H1 (cell line): ENCODE measurements at regions of chr6 and their contacts with region 1.

Region 1: GRCh38 chr6:109526905-109527628 is 44.0 kb upstream of the ZBTB24 start:
- DNase-seq: peak in 1 of 2 experiments; percentile 64
- H3K4me3 ChIP-seq: no peak overlapping the region
- H3K27ac ChIP-seq: no peak overlapping the region
- H3K4me1 ChIP-seq: peaks cover 0 to 3% (median 0%) of the 10 kb centered on the region in 4 experiments; a peak in 1 of 7 replicates
- H3K27me3 ChIP-seq: no peaks in the 10 kb centered on the region
- CTCF ChIP-seq: peak; percentile 36 to 74 (median 67)
- EP300 ChIP-seq: no peak
- POLR2A ChIP-seq: no peak
- RAD21 ChIP-seq: peak; percentile 83 to 85

Region 2: GRCh38 chr6:109263873-109264700 is 263.0 kb before region 1 on chr6:
- CTCF ChIA-PET with region 1: no interaction called
- POLR2A ChIA-PET with region 1: no interaction called
- DNase-seq: no peak
- H3K4me3 ChIP-seq: no peak overlapping the region
- H3K27ac ChIP-seq: no peak overlapping the region
- H3K4me1 ChIP-seq: peaks cover 0 to 5% (median 0%) of the 10 kb centered on the region in 4 experiments; a peak in 2 of 7 replicates
- H3K27me3 ChIP-seq: no peaks in the 10 kb centered on the region
- CTCF ChIP-seq: no peak
- EP300 ChIP-seq: no peak
- POLR2A ChIP-seq: no peak
- RAD21 ChIP-seq: no peak

Region 3: GRCh38 chr6:109284675-109285074 is 242.4 kb before region 1 on chr6:
- CTCF ChIA-PET with region 1: no interaction called
- POLR2A ChIA-PET with region 1: no interaction called
- DNase-seq: no peak
- H3K4me3 ChIP-seq: no peak overlapping the region
- H3K27ac ChIP-seq: no peak overlapping the region
- H3K4me1 ChIP-seq: no peaks in the 10 kb centered on the region
- H3K27me3 ChIP-seq: no peaks in the 10 kb centered on the region
- CTCF ChIP-seq: no peak
- EP300 ChIP-seq: no peak
- POLR2A ChIP-seq: no peak
- RAD21 ChIP-seq: no peak

Region 4: DNA sequence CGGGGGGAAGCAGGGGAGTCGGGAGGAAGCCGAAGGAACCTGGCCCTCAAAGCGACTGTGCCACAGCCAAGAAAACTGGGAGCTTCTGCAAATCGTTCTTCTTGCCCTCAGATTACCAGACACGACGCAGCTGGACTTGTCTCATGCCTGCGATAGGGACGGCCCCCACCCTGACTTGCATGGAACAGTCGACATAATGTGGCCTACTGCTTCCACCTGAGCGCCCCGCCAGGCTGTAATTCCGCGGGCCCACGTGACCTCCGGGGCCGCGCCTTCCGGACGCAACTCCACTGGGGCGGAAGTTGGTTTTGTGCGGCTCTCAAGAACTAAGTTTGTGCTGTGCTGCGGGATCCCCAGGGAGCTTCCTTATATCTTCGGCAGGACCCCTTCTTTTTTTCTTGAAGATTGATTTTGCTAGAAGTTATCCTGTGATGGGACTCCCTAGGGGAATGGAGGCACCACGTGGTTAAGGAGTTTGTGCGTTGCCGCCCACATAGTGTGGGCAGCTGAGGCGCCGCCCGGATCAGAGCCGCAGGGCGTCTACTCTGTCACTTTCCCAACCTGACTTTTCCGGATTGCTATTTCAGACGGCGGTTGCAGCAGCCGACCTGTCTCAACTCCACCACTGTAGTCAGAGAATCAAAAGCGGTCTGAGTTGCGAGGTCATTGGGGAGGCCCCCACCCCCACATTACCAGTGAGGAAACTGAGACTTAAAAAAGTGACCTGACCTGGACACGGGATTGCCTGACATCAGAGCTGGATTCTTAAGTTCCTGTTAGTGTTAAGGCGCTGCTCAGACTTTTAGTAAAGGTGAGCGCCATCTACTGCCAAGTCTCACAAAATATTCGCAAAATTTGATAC is 144.3 kb before region 1 on chr6:
- CTCF ChIA-PET with region 1: no interaction called
- POLR2A ChIA-PET with region 1: no interaction called
- DNase-seq: peak; percentile 59 to 96
- H3K4me3 ChIP-seq: peak overlapping the region; percentile 67 to 94 (median 80)
- H3K27ac ChIP-seq: peak overlapping the region; percentile 100
- H3K4me1 ChIP-seq: peaks cover 0 to 5% (median 0%) of the 10 kb centered on the region in 4 experiments; a peak in 2 of 7 replicates
- H3K27me3 ChIP-seq: no peaks in the 10 kb centered on the region
- CTCF ChIP-seq: peak in 2 of 3 experiments; percentile 40 to 47; a peak in 3 of 4 replicates
- EP300 ChIP-seq: peak in 1 of 2 experiments; percentile 99; a peak in 2 of 3 replicates
- POLR2A ChIP-seq: peak; percentile 74 to 79; a peak in 2 of 3 replicates
- RAD21 ChIP-seq: peak; percentile 52 to 58

Region 5: DNA sequence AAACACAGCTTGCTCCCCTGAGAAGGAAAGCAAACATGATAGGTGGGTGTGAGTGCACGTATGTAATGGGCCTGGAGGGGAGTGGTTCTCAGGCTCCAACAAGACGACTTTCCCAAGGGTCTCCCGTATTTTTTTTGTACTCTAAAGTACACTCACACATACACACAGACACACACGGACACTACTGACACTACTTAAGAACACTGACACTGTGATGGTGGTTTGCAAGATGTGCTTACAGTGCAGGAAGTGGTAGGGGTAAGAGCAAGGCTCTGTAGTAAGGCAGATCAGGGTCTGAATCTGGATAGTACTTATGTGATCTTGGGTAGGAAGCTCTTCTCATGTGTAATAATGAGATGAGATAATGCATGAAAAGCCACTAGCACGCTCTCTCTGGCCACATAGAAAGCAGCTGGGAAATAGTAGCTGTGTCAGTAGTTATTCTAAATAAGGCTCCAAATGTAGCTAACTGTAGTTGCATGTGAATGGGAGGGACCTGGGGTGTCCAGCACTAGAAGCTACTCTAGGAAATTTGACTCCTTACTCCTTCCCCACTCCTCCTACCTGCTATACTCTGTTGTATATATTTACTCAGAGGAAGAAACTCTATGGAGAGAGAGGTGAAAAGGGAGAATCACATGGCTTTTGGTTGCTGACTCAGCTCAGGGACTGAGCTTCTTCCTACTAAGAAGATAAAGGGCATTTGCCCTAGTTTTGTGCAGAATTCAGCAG is 35.7 kb before region 1 on chr6:
- CTCF ChIA-PET with region 1: interaction called, 13 read pairs
- POLR2A ChIA-PET with region 1: no interaction called
- DNase-seq: no peak
- H3K4me3 ChIP-seq: peak overlapping the region in 1 of 4 experiments; percentile 10; a peak in 1 of 8 replicates
- H3K27ac ChIP-seq: 0 out of 2 replicates have a peak overlapping the region, but pooled peaks have one; percentile 16
- H3K4me1 ChIP-seq: peaks cover 3 to 23% (median 18%) of the 10 kb centered on the region in 4 experiments
- H3K27me3 ChIP-seq: no peaks in the 10 kb centered on the region
- CTCF ChIP-seq: no peak
- EP300 ChIP-seq: no peak
- POLR2A ChIP-seq: no peak
- RAD21 ChIP-seq: no peak

Region 6: DNA sequence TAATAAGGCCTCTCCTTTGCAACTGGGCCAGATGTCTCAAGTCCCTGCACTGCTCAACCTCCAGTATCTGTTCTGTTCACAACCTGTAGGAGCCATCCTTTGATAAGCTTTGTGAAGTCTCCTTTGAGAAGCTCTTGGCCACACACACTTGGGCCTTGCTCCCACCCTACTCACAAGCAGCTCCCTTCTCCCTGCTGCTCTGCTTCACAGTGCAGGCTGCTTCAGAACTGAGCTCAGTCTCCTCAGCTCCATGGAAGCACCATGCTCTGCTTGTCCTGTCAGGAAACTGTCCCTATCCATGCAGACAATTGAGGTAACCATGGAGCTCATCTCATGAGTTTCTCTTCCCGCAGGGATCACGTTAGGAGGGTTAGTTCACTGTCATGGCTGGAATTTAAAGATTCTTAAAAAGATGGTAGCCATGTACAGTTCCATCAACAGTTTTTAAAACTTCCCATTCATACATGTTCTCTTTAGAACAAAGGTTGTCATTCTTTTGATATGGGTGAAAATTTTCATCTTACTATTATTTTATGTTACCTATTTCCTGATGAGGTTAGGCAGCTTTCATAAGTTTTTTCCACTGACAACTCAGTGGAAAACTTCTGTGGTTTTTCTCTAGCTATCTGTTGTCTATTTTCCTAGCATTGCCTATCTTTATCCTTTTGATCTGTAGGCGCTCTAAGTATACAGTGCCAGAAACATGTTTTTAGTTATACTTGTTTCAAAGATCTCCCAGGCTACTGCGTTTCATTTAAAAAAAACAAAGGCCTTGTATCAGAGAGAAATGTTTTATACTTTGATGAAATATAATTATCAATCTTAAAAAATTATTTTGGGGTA is 101.3 kb after region 1 on chr6:
- CTCF ChIA-PET with region 1: no interaction called
- POLR2A ChIA-PET with region 1: no interaction called
- DNase-seq: no peak
- H3K4me3 ChIP-seq: no peak overlapping the region
- H3K27ac ChIP-seq: no peak overlapping the region
- H3K4me1 ChIP-seq: no peaks in the 10 kb centered on the region
- H3K27me3 ChIP-seq: no peaks in the 10 kb centered on the region
- CTCF ChIP-seq: no peak
- EP300 ChIP-seq: no peak
- POLR2A ChIP-seq: no peak
- RAD21 ChIP-seq: no peak

Region 7: DNA sequence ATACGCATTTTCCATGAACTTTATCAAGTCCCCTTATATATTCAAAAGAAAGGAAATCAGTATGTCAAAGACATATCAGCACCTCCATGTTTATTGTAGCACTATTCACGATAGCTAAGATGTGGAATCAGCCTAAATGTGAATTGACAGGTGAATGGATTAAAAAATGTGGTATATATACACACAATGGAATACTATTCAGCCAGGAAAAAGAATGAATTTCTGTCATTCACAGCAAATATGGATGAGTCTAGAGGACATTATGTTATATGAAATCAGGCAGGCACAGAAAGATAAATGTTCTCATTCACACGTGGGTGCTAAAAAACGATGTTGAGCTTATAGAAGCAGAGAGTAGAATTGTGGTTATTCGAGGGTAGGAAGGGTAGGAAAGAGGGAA is 169.3 kb after region 1 on chr6:
- CTCF ChIA-PET with region 1: interaction called, 10 read pairs
- POLR2A ChIA-PET with region 1: no interaction called
- DNase-seq: no peak
- H3K4me3 ChIP-seq: no peak overlapping the region
- H3K27ac ChIP-seq: no peak overlapping the region
- H3K4me1 ChIP-seq: peaks cover 0 to 7% (median 3%) of the 10 kb centered on the region in 4 experiments; a peak in 4 of 7 replicates
- H3K27me3 ChIP-seq: no peaks in the 10 kb centered on the region
- CTCF ChIP-seq: no peak
- EP300 ChIP-seq: no peak
- POLR2A ChIP-seq: no peak
- RAD21 ChIP-seq: no peak